ENCODE measurements at regions of chr9 and their contacts with region 1.

Region 1: DNA sequence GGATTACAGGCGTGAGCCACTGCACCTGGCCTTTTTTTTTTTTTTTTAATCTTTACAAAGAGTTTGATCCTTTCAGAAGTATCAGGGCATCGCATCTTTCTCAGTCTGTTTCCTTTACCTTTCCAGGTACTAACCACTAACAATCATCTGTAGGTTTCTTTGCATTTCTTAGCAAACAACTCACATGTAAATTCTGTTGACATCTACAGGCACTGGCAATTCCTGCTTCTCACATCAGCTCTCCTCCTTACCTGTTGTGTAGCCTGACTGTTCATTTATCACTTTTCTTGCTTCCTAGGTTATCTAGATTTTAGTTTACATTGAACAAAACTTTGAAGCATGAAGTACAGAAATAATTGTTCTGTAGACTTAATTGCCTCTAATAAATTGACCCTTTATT is 27.5 kb upstream of the VPS13A start:
- DNase-seq: no peak
- ATAC-seq: no peak
- H3K4me3 ChIP-seq: no peak overlapping the region
- H3K27ac ChIP-seq: no peak overlapping the region
- H3K4me1 ChIP-seq: no peaks in the 10 kb centered on the region
- H3K27me3 ChIP-seq: no peaks in the 10 kb centered on the region; a peak in 1 of 4 replicates
- CTCF ChIP-seq: no peak
- EP300 ChIP-seq: no peak
- POLR2A ChIP-seq: no peak
- RAD21 ChIP-seq: no peak

Region 2: DNA sequence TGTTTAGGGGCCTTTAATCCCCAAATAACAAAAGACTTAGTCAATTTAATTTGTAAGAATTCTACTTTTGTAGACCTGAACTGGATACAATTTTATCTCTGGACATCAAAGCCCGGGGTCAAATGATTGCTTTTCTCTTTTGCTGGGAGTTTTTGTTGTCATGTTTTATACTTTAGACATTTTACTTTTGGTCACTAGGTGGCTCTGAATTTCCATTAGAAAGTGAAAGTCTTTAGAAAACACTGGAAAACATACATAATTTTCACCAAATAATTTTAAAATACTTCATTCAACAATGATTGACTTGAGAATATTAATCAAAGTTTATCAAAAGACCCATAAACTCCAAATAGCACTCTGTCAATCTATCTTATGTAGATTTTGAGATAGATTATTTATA is 388.4 kb before region 1 on chr9:
- CTCF ChIA-PET with region 1: interaction called, 4 read pairs
- POLR2A ChIA-PET with region 1: no interaction called
- RAD21 ChIA-PET with region 1: no interaction called
- SMC1A ChIA-PET with region 1: interaction called, 3 read pairs
- in situ Hi-C with region 1: no loop called
- intact Hi-C with region 1: loop called (anchors 2 kb)
- DNase-seq: no peak
- ATAC-seq: no peak
- H3K4me3 ChIP-seq: no peak overlapping the region
- H3K27ac ChIP-seq: no peak overlapping the region
- H3K4me1 ChIP-seq: no peaks in the 10 kb centered on the region
- H3K27me3 ChIP-seq: no peaks in the 10 kb centered on the region
- CTCF ChIP-seq: peak in 1 of 3 experiments; percentile 2; a peak in 1 of 6 replicates
- EP300 ChIP-seq: no peak
- POLR2A ChIP-seq: no peak
- RAD21 ChIP-seq: peak; percentile 19; the same call in 1 of the 2 replicates

Region 3: DNA sequence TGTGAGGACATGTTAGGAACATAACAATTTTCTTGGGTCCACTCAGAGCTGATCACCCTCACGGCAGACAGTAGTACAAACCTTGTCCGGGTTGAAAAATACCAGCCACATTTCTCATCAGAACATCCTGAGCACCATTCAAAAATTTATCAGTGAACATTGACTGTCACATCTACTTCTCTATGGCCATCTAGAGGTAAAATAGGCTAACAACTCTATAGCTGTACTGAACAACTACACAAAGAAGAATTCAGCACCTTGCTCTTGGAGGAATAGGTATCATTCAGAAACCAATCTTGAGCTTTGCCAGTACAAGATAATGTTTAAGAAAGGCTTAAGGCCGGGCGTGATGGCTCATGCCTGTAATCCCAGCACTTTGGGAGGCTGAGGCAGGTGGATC is 77.9 kb before region 1 on chr9:
- CTCF ChIA-PET with region 1: no interaction called
- POLR2A ChIA-PET with region 1: no interaction called
- RAD21 ChIA-PET with region 1: no interaction called
- SMC1A ChIA-PET with region 1: no interaction called
- in situ Hi-C with region 1: no loop called
- intact Hi-C with region 1: no loop called
- DNase-seq: no peak
- ATAC-seq: no peak
- H3K4me3 ChIP-seq: no peak overlapping the region
- H3K27ac ChIP-seq: no peak overlapping the region
- H3K4me1 ChIP-seq: no peaks in the 10 kb centered on the region
- H3K27me3 ChIP-seq: no peaks in the 10 kb centered on the region
- CTCF ChIP-seq: no peak
- EP300 ChIP-seq: no peak
- POLR2A ChIP-seq: no peak
- RAD21 ChIP-seq: no peak

Region 4: GRCh38 chr9:77194423-77194822 is 44.5 kb after region 1 on chr9:
- CTCF ChIA-PET with region 1: no interaction called
- POLR2A ChIA-PET with region 1: no interaction called
- RAD21 ChIA-PET with region 1: no interaction called
- SMC1A ChIA-PET with region 1: no interaction called
- in situ Hi-C with region 1: no loop called
- intact Hi-C with region 1: no loop called
- DNase-seq: no peak
- ATAC-seq: no peak; the same call in 2 of the 3 replicates
- H3K4me3 ChIP-seq: no peak overlapping the region
- H3K27ac ChIP-seq: no peak overlapping the region
- H3K4me1 ChIP-seq: no peaks in the 10 kb centered on the region
- H3K27me3 ChIP-seq: no peaks in the 10 kb centered on the region
- CTCF ChIP-seq: no peak
- EP300 ChIP-seq: no peak
- POLR2A ChIP-seq: no peak
- RAD21 ChIP-seq: no peak

Measured in GM12878 (cell line).